CD4-positive, alpha-beta memory T cell (primary cell): ENCODE measurements at regions of chr7 and their contacts with region 1.

Region 1: DNA sequence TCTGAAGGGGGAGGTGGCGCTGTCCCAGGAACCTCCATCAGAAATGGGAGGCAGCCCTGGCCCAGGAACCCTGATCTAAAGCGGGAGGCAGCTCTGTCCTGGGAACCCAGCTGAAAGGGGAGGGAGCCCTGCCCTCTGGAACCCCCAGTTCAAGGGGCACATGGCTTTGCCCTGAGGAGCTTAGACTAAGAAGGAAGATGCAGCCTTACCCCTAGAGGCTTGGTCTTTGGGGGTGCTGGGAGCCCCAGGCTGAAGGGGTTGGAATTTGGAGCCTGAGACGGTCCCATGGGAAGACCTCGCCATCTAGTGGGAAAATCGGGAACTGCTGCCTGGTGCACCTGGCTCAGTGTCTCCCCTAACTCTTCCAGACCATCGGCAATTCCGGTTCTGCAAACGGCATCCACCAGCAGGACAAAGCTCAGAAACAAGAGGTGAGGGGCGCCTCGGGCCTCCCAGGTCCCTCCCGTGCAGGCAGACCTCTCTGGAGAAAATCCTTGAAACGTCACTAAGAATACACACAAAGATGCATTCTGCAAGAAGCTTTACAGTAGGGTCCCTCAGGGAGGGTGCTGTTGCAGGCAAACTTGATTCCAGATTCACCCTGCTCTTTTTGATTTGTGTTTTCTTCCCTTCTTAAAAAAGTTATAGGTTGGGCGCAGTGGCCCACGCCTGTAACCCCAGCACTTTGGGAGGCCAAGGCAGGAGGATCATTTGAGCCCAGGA is 52.4 kb upstream of the GTF2IRD1 start:
- DNase-seq: peak; percentile 57 to 71 (median 61)
- H3K4me3 ChIP-seq: no peak overlapping the region
- H3K4me3 Mint-ChIP-seq: no peak overlapping the region
- H3K27ac ChIP-seq: no peak overlapping the region
- H3K27ac Mint-ChIP-seq: no peak overlapping the region
- H3K4me1 ChIP-seq: no peaks in the 10 kb centered on the region
- H3K4me1 Mint-ChIP-seq: peaks cover 0 to 2% (median 0%) of the 10 kb centered on the region in 4 donors
- H3K27me3 ChIP-seq: no peaks in the 10 kb centered on the region
- H3K27me3 Mint-ChIP-seq: no peaks in the 10 kb centered on the region

Region 2: DNA sequence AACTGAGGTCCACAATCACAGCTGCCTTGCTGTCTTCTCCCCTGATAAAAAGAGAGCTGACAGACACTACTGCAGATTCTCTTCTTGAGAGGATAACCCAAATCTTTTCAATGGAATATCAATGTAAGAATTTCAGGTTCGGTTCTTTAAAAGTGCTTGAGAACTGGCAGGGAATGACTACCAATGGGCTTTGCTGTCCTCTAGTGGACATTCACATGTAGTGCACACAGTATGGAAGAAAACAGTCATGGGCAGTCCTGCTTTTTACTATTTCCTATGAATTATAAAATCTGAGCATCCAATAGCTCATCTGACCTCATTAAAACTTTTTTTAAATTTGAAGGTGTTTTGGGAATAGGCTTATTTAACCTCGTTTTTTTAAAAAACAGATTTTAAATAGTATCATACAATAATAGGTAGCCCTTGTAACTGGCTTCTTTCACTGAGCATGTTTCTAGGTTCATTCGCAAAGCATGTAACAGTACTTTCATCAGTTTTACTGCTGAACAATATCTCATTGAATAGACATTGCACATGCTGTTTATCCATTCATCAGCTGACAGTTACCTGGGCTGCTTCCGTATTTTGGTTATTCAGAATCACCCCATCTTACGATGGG is 949.4 kb before region 1 on chr7:
- CTCF ChIA-PET with region 1: no interaction called
- POLR2A ChIA-PET with region 1: no interaction called
- intact Hi-C with region 1: no loop called
- DNase-seq: peak in 4 of 5 donors; percentile 56 to 60 (median 57)
- H3K4me3 ChIP-seq: no peak overlapping the region
- H3K4me3 Mint-ChIP-seq: no peak overlapping the region
- H3K27ac ChIP-seq: no peak overlapping the region
- H3K27ac Mint-ChIP-seq: peak overlapping the region in 2 of 7 donors; percentile 52 to 64
- H3K4me1 ChIP-seq: no peaks in the 10 kb centered on the region
- H3K4me1 Mint-ChIP-seq: peaks cover 0 to 7% (median 7%) of the 10 kb centered on the region in 4 donors
- H3K27me3 ChIP-seq: no peaks in the 10 kb centered on the region
- H3K27me3 Mint-ChIP-seq: no peaks in the 10 kb centered on the region

Region 3: GRCh38 chr7:74068393-74069085 is 332.8 kb before region 1 on chr7:
- CTCF ChIA-PET with region 1: interaction called, 84 read pairs
- POLR2A ChIA-PET with region 1: no interaction called
- intact Hi-C with region 1: no loop called
- DNase-seq: no peak
- H3K4me3 ChIP-seq: no peak overlapping the region
- H3K4me3 Mint-ChIP-seq: no peak overlapping the region
- H3K27ac ChIP-seq: no peak overlapping the region
- H3K27ac Mint-ChIP-seq: peak overlapping the region in 1 of 7 donors; percentile 55
- H3K4me1 ChIP-seq: no peaks in the 10 kb centered on the region
- H3K4me1 Mint-ChIP-seq: peaks cover 0 to under 1% (median 0%) of the 10 kb centered on the region in 4 donors
- H3K27me3 ChIP-seq: no peaks in the 10 kb centered on the region
- H3K27me3 Mint-ChIP-seq: no peaks in the 10 kb centered on the region

Region 4: DNA sequence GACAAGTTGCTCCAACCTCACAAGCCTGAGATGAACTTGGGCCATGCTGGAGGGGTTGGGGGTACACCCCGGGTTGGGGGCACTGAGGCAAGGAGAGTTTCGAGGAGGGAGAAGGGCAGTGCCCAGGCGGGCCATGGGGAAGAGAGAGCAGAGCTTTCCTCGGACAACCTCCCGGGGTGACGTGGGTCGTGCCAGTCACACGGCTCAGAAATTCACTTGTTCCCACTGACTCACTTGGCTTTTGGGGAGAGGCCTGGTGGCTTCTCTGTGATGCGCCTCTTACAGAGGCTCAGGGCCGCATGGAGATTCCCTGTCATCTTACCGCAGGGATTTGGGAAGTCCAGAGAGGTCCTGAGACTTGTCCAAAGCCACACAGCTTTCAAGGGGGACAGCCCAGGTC is 188.6 kb before region 1 on chr7:
- CTCF ChIA-PET with region 1: interaction called, 174 read pairs
- POLR2A ChIA-PET with region 1: no interaction called
- intact Hi-C with region 1: no loop called
- DNase-seq: no peak
- H3K4me3 ChIP-seq: no peak overlapping the region
- H3K4me3 Mint-ChIP-seq: no peak overlapping the region
- H3K27ac ChIP-seq: no peak overlapping the region
- H3K27ac Mint-ChIP-seq: no peak overlapping the region
- H3K4me1 ChIP-seq: peaks cover 13% of the 10 kb centered on the region
- H3K4me1 Mint-ChIP-seq: peaks cover 8 to 22% (median 14%) of the 10 kb centered on the region in 4 donors
- H3K27me3 ChIP-seq: no peaks in the 10 kb centered on the region
- H3K27me3 Mint-ChIP-seq: no peaks in the 10 kb centered on the region

Region 5: DNA sequence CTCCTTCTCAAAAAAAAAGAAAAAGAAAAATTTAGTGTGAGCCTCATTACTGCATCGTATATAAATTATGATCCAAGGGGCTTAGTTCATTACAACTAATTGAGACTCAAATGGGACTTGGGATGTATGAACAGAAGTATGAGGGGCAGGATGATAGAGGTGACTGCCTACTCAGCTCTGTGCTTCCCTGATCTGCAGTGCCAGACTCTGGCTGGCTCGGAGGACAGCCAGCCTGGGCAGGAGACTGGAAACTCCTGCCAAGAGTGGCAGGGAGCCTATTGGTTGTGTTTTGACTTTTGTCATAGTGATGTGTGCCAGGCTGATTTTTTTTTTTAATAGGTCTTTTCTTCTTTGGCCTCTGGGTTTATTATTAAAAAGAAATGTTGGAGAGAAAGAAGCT is 21.4 kb before region 1 on chr7:
- CTCF ChIA-PET with region 1: interaction called, 10 read pairs
- POLR2A ChIA-PET with region 1: no interaction called
- intact Hi-C with region 1: no loop called
- DNase-seq: no peak
- H3K4me3 ChIP-seq: no peak overlapping the region
- H3K4me3 Mint-ChIP-seq: no peak overlapping the region
- H3K27ac ChIP-seq: no peak overlapping the region
- H3K27ac Mint-ChIP-seq: no peak overlapping the region
- H3K4me1 ChIP-seq: no peaks in the 10 kb centered on the region
- H3K4me1 Mint-ChIP-seq: no peaks in the 10 kb centered on the region
- H3K27me3 ChIP-seq: no peaks in the 10 kb centered on the region
- H3K27me3 Mint-ChIP-seq: no peaks in the 10 kb centered on the region

Region 6: GRCh38 chr7:74388880-74389415 is 12.3 kb before region 1 on chr7:
- CTCF ChIA-PET with region 1: interaction called, 35 read pairs
- POLR2A ChIA-PET with region 1: no interaction called
- intact Hi-C with region 1: no loop called
- DNase-seq: no peak
- H3K4me3 ChIP-seq: no peak overlapping the region
- H3K4me3 Mint-ChIP-seq: no peak overlapping the region
- H3K27ac ChIP-seq: no peak overlapping the region
- H3K27ac Mint-ChIP-seq: no peak overlapping the region
- H3K4me1 ChIP-seq: no peaks in the 10 kb centered on the region
- H3K4me1 Mint-ChIP-seq: no peaks in the 10 kb centered on the region
- H3K27me3 ChIP-seq: no peaks in the 10 kb centered on the region
- H3K27me3 Mint-ChIP-seq: no peaks in the 10 kb centered on the region

Region 7: DNA sequence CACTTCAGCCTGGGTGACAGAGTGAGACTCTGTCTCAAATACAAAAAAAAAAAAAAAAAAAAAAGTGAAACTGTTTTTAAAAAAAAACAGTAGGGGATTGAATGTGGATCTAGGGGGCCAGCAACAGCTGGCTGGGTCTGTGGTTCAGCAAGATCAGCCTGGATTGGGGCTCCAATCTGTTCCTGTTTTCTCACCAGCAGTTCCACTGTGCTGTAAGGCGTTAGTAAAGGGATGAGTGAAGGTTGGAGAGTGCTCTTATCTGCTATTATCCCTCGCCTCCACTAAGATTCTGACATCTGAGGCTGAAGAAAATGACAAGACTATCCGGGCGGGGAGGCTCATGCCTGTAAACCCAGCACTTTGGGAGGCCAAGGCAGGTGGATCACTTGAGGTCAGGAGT is 10.8 kb after region 1 on chr7:
- CTCF ChIA-PET with region 1: interaction called, 10 read pairs
- POLR2A ChIA-PET with region 1: no interaction called
- intact Hi-C with region 1: no loop called
- DNase-seq: no peak
- H3K4me3 ChIP-seq: no peak overlapping the region
- H3K4me3 Mint-ChIP-seq: no peak overlapping the region
- H3K27ac ChIP-seq: no peak overlapping the region
- H3K27ac Mint-ChIP-seq: no peak overlapping the region
- H3K4me1 ChIP-seq: no peaks in the 10 kb centered on the region
- H3K4me1 Mint-ChIP-seq: no peaks in the 10 kb centered on the region
- H3K27me3 ChIP-seq: no peaks in the 10 kb centered on the region
- H3K27me3 Mint-ChIP-seq: no peaks in the 10 kb centered on the region